Thyroid gland (tissue), 4 donors: ENCODE measurements at regions of chr7 and their contacts with region 1.

Region 1: DNA sequence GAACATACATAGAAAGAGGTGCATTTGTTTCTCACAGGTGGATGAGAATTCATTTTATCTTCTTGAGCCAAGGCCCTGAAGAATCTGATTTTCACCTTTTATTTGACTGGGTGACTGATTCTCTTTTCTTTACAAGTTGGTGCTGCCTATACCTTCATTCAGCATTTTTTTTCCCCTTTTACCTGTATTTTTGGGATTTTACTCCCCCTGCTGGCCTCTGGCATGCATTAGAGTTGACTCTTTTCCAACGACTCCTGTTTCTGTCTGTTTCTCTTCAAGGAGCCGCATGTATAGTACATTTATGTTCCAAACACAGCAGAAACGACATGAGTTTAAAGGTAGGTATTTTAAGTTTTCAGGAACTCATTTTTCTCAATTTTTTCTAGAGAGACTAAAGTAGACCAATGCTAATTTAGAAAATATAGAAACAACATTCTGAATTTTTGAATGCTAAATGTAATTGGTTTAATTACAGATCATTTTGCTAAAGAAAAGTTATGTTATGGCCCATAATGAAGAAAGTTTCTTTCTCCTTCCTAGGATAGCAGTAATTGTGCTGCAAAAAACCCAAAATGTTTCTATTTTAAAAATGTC is 149.8 kb upstream of the HDAC9 start:
- DNase-seq: peak; percentile 21 to 32
- H3K4me3 ChIP-seq: no peak overlapping the region
- H3K27ac ChIP-seq: no peak overlapping the region
- H3K4me1 ChIP-seq: no peaks in the 10 kb centered on the region
- H3K27me3 ChIP-seq: no peaks in the 10 kb centered on the region
- CTCF ChIP-seq: peak; percentile 35 to 70 (median 62)
- POLR2A ChIP-seq: no peak

Region 2: DNA sequence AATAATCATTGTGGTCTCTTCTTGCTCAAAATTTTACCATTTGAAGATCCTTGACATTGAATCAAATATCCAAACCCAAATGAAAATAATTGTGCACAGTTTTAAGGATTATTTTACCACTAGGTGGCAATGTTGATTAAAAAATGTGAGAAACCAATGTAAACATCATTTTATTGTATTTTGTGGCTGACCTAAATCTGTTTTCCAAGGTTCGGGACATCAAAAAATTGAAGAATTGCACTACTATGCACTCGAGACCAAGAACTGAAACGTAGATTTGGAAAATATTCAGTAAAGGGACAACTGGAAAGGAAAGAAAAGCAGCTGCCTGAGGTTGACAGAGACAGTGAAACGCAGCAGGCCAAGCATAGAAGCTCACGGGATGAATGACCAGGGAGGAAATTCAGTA is 664.8 kb before region 1 on chr7:
- intact Hi-C with region 1: loop called (anchors 10 kb)
- DNase-seq: no peak
- H3K4me3 ChIP-seq: no peak overlapping the region
- H3K27ac ChIP-seq: no peak overlapping the region
- H3K4me1 ChIP-seq: peaks cover 0 to 19% of the 10 kb centered on the region in 2 donors
- H3K27me3 ChIP-seq: no peaks in the 10 kb centered on the region
- CTCF ChIP-seq: peak in 5 of 6 experiments; percentile 12 to 59 (median 53)
- POLR2A ChIP-seq: no peak

Region 3: GRCh38 chr7:17965603-17966002 is 380.1 kb before region 1 on chr7:
- intact Hi-C with region 1: loop called (anchors 10 kb)
- DNase-seq: no peak
- H3K4me3 ChIP-seq: no peak overlapping the region
- H3K27ac ChIP-seq: no peak overlapping the region
- H3K4me1 ChIP-seq: no peaks in the 10 kb centered on the region
- H3K27me3 ChIP-seq: no peaks in the 10 kb centered on the region
- CTCF ChIP-seq: no peak
- POLR2A ChIP-seq: no peak

Region 4: GRCh38 chr7:18212758-18213157 is 133.0 kb before region 1 on chr7:
- intact Hi-C with region 1: no loop called
- DNase-seq: no peak
- H3K4me3 ChIP-seq: no peak overlapping the region
- H3K27ac ChIP-seq: no peak overlapping the region
- H3K4me1 ChIP-seq: no peaks in the 10 kb centered on the region
- H3K27me3 ChIP-seq: no peaks in the 10 kb centered on the region
- CTCF ChIP-seq: no peak
- POLR2A ChIP-seq: no peak